Thyroid gland (tissue), 4 donors: ENCODE measurements at regions of chr12 and their contacts with region 1.

Region 1: GRCh38 chr12:10613349-10614055 is at the start of gene MAGOHB:
- DNase-seq: peak; percentile 94 to 96
- H3K4me3 ChIP-seq: peak within 1 kb of the TSS; percentile 17 to 50 (median 47)
- H3K27ac ChIP-seq: peak within 1 kb of the TSS; percentile 69 to 77 (median 75)
- H3K4me1 ChIP-seq: peaks cover 0 to 8% of the 10 kb centered on the region in 2 donors
- H3K27me3 ChIP-seq: no peaks in the 10 kb centered on the region
- CTCF ChIP-seq: peak in 1 of 6 experiments; percentile 33
- POLR2A ChIP-seq: peak in 1 of 2 donors; percentile 81
- total RNA-seq, gene MAGOHB: 13.1 to 17.4 (median 14.5) TPM

Region 2: DNA sequence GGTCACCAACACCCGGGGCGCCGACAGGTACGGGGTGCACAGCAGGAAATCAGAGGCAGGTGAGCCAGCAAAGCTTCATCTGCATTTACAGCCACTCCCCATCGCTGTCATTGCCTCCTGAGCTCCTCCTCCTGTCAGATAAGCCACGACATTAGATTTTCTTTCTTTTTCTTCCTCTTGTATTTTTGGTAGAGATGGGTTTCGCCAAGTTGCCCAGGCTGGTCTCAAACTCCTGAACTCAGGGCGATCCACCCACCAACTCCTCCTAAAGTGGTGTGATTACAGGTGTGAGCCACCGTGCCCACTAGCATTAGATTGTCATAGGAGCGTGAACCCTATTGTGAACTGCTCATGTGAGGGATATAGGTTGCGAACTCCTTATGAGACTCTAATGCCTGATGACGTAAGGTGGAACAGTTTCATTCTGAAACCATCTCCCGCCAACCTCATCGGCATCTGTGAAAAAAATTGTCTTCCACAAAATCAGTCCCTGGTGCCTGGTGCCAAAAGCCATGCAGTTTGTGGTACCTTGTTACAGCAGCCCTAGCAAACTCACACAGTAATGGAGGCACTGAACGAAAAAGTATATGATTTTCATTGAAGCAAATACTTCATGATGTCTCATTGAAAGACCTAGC is 58.8 kb after region 1 on chr12:
- intact Hi-C with region 1: no loop called
- DNase-seq: no peak
- H3K4me3 ChIP-seq: no peak overlapping the region
- H3K27ac ChIP-seq: no peak overlapping the region
- H3K4me1 ChIP-seq: peaks cover 7 to 9% of the 10 kb centered on the region in 2 donors
- H3K27me3 ChIP-seq: no peaks in the 10 kb centered on the region
- CTCF ChIP-seq: no peak
- POLR2A ChIP-seq: no peak

Region 3: DNA sequence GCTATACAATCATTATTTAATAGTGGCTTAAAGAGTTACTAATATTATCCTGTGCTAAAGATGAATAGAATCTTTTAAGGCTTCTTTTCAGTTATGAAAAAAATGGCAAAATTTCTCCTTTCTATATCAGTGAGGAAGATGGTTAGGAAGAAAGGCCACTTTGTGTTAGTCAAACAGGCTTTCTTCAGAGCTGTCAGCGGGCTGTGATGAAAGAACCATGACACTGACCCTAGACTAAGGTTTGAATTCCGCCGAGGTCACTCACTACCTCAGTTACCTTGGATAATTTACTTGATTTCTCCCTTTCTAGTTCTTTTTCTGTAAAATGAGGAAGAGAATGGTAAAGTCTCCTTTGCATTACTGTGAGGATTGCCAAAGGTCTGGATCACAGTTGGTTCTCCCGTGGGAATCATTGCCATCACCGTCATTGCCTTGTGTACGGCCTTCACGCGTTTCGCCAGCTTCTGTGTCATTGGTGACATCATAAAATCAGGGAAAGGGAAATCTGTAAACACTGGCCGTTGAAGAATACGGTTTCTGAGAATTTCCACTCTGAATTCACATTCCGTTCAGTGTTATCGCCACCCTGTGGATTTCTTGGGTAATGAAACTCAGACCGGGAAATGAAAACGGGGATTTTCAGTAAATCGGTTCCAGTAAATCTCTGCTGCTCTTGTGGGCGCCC is 136.3 kb after region 1 on chr12:
- intact Hi-C with region 1: loop called (anchors 10 kb)
- DNase-seq: peak; percentile 76 to 77
- H3K4me3 ChIP-seq: peak overlapping the region in 1 of 3 donors; percentile 16
- H3K27ac ChIP-seq: peak overlapping the region in 1 of 3 donors; percentile 49
- H3K4me1 ChIP-seq: peaks cover 0 to 5% of the 10 kb centered on the region in 2 donors
- H3K27me3 ChIP-seq: no peaks in the 10 kb centered on the region
- CTCF ChIP-seq: peak; percentile 64 to 95 (median 86)
- POLR2A ChIP-seq: no peak